Panc1 (cell line): ENCODE measurements at regions of chr2 and their contacts with region 1.

Region 1: DNA sequence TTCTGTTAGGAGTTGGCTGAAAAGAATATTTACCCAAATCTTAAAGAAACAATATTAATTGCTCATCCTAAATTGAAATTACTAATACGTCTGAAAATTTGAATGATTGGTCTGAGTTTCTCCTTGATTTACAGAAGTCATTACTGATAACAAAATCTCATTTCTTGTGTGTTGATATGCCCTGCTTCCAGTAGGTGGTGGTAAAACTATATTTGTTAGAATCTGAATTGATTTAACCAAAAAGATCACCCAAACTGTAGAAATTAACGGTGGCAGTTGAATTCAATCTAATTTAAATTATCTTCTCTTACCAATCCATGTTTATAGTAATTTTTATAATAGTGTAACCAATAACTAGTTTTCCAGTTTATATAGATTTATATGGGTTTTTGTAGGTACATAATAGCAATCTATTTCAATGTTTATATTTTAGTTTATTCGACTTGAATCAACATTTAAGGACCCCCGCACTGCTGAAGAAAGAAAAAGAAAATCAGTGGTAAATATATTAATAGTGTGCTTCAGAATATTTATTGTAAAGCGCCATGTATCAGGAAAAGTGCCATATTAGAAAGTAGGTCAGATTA is 38.3 kb downstream of the PAPOLG start:
- DNase-seq: no peak
- ATAC-seq: no peak
- H3K4me3 ChIP-seq: no peak overlapping the region
- H3K27ac ChIP-seq: no peak overlapping the region
- H3K4me1 ChIP-seq: no peaks in the 10 kb centered on the region
- H3K27me3 ChIP-seq: no peaks in the 10 kb centered on the region
- CTCF ChIP-seq: peak; percentile 32; the same call in 1 of the 2 replicates

Region 2: GRCh38 chr2:60881047-60881932 is 86.9 kb after region 1 on chr2 and contains the start of gene REL:
- CTCF ChIA-PET with region 1: no interaction called
- POLR2A ChIA-PET with region 1: no interaction called
- in situ Hi-C with region 1: no loop called
- intact Hi-C with region 1: loop called (anchors 10 kb)
- DNase-seq: peak; percentile 46
- ATAC-seq: peak; percentile 99
- H3K4me3 ChIP-seq: peak within 1 kb of the TSS; percentile 85 to 87
- H3K27ac ChIP-seq: peak within 1 kb of the TSS; percentile 97
- H3K4me1 ChIP-seq: peaks cover 25% of the 10 kb centered on the region; the same call in 1 of the 2 replicates
- H3K27me3 ChIP-seq: no peaks in the 10 kb centered on the region
- CTCF ChIP-seq: 0 out of 2 replicates have a peak, but pooled peaks have one; percentile 11
- total RNA-seq, gene REL: 10.0 TPM

Region 3: GRCh38 chr2:60998628-60999545 is 204.5 kb after region 1 on chr2:
- CTCF ChIA-PET with region 1: no interaction called
- POLR2A ChIA-PET with region 1: no interaction called
- in situ Hi-C with region 1: no loop called
- intact Hi-C with region 1: loop called (anchors 2 kb)
- DNase-seq: no peak
- ATAC-seq: peak; percentile 80
- H3K4me3 ChIP-seq: no peak overlapping the region
- H3K27ac ChIP-seq: no peak overlapping the region
- H3K4me1 ChIP-seq: no peaks in the 10 kb centered on the region
- H3K27me3 ChIP-seq: no peaks in the 10 kb centered on the region
- CTCF ChIP-seq: peak; percentile 67; the same call in 1 of the 2 replicates